CD8-positive, alpha-beta T cell (primary cell): ENCODE measurements at regions of chr11 and their contacts with region 1.

Region 1: DNA sequence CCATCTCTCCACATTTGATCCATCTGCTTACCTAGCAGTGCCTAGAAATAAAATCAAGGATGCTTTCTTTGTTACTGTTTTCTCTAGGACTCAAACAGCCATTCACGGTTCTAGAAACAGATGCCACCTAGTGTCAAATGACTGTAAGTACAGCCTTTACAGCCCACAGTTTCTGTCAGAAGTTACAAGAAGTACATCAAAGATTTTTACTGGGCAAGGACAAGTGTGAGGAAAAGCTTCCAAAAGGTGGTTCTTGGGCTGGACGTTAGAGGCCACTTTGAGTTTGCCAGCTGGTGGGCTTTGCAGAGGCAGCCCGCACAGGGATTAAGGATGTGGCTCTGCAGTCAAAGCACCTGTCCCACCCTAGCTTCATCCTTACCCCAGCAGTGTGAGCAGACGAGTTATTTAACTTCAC is 6.9 kb downstream of the KMT5B start:
- DNase-seq: peak in 3 of 9 experiments; percentile 50 to 77 (median 62)
- ATAC-seq: peak; percentile 88
- H3K4me3 ChIP-seq: no peak overlapping the region
- H3K4me3 Mint-ChIP-seq: no peak overlapping the region
- H3K27ac ChIP-seq: no peak overlapping the region
- H3K27ac Mint-ChIP-seq: no peak overlapping the region
- H3K4me1 ChIP-seq: peaks cover 43% of the 10 kb centered on the region
- H3K4me1 Mint-ChIP-seq: peaks cover 71% of the 10 kb centered on the region
- H3K27me3 ChIP-seq: no peaks in the 10 kb centered on the region
- H3K27me3 Mint-ChIP-seq: no peaks in the 10 kb centered on the region
- CTCF ChIP-seq: peak; percentile 88

Region 2: GRCh38 chr11:68009391-68010089 is 196.7 kb before region 1 on chr11:
- CTCF ChIA-PET with region 1: no interaction called
- POLR2A ChIA-PET with region 1: no interaction called
- intact Hi-C with region 1: loop called in 1 of 2 experiments (anchors 1 kb)
- DNase-seq: peak in 1 of 9 experiments; percentile 34
- ATAC-seq: no peak
- H3K4me3 ChIP-seq: no peak overlapping the region
- H3K4me3 Mint-ChIP-seq: no peak overlapping the region
- H3K27ac ChIP-seq: no peak overlapping the region
- H3K27ac Mint-ChIP-seq: no peak overlapping the region
- H3K4me1 ChIP-seq: peaks cover 2% of the 10 kb centered on the region
- H3K4me1 Mint-ChIP-seq: peaks cover 14% of the 10 kb centered on the region
- H3K27me3 ChIP-seq: no peaks in the 10 kb centered on the region
- H3K27me3 Mint-ChIP-seq: peaks cover 5% of the 10 kb centered on the region
- CTCF ChIP-seq: no peak

Region 3: GRCh38 chr11:68076371-68077042 is 129.7 kb before region 1 on chr11:
- CTCF ChIA-PET with region 1: interaction called, 3 read pairs
- POLR2A ChIA-PET with region 1: no interaction called
- intact Hi-C with region 1: loop called (anchors 2 to 5 kb)
- DNase-seq: peak in 2 of 9 experiments; percentile 13 to 25
- ATAC-seq: no peak
- H3K4me3 ChIP-seq: no peak overlapping the region
- H3K4me3 Mint-ChIP-seq: no peak overlapping the region
- H3K27ac ChIP-seq: no peak overlapping the region
- H3K27ac Mint-ChIP-seq: no peak overlapping the region
- H3K4me1 ChIP-seq: no peaks in the 10 kb centered on the region
- H3K4me1 Mint-ChIP-seq: no peaks in the 10 kb centered on the region
- H3K27me3 ChIP-seq: no peaks in the 10 kb centered on the region
- H3K27me3 Mint-ChIP-seq: no peaks in the 10 kb centered on the region
- CTCF ChIP-seq: no peak